Caco-2 (cell line): ENCODE measurements at regions of chr6 and their contacts with region 1.

Region 1: GRCh38 chr6:111259089-111259831 is 172.0 kb downstream of the SLC16A10 start:
- DNase-seq: peak; percentile 98 to 99
- H3K4me3 ChIP-seq: peak overlapping the region; percentile 60
- H3K4me3 Mint-ChIP-seq: peak overlapping the region; percentile 77
- H3K27ac Mint-ChIP-seq: peak overlapping the region; percentile 76
- H3K4me1 ChIP-seq: peaks cover 13% of the 10 kb centered on the region
- H3K4me1 Mint-ChIP-seq: peaks cover 14% of the 10 kb centered on the region
- H3K27me3 ChIP-seq: no peaks in the 10 kb centered on the region
- H3K27me3 Mint-ChIP-seq: no peaks in the 10 kb centered on the region
- CTCF ChIP-seq: peak; percentile 82 to 92

Region 2: GRCh38 chr6:110528101-110528929 is 730.9 kb before region 1 on chr6:
- CTCF ChIA-PET with region 1: no interaction called
- POLR2A ChIA-PET with region 1: no interaction called
- intact Hi-C with region 1: loop called (anchors 5 kb)
- DNase-seq: peak in 1 of 2 experiments; percentile 58
- H3K4me3 ChIP-seq: no peak overlapping the region
- H3K4me3 Mint-ChIP-seq: no peak overlapping the region
- H3K27ac Mint-ChIP-seq: no peak overlapping the region
- H3K4me1 ChIP-seq: peaks cover 3% of the 10 kb centered on the region; the same call in 1 of the 2 replicates
- H3K4me1 Mint-ChIP-seq: no peaks in the 10 kb centered on the region
- H3K27me3 ChIP-seq: no peaks in the 10 kb centered on the region
- H3K27me3 Mint-ChIP-seq: no peaks in the 10 kb centered on the region
- CTCF ChIP-seq: peak; percentile 68 to 79

Region 3: DNA sequence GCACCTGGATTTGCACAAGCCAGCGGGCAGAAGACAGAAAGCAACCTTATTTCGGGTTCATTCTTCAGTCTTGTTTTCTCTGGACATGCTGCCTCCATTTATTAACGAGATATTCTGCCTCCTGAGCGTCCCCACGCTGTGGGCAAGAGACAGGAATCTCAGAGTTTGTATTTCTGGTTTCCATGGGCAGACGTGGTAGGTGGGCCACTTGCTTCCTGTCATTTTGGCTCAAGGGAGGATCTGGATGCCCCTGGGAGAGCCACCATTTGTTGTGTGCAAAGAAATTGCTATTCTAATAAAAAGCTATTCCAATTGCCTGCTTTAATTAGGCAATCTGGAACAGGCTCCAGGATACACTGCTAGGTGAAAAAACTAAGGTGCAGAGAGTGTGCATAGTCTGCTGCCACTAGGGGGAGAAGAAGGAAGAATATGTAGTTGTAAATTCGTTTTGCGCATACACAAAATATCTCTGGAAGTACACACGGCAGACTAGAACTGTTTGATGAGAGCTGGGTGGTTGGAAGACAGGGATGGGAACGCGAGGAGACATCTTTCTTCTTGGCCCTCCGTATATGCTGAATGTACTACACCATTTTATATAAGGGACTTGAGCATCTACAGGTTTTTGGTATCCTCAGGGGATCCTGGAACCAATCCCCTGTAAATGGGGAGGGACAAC is 202.0 kb before region 1 on chr6:
- CTCF ChIA-PET with region 1: interaction called, 7 read pairs
- POLR2A ChIA-PET with region 1: no interaction called
- intact Hi-C with region 1: loop called (anchors 1 kb)
- DNase-seq: peak; percentile 19 to 39
- H3K4me3 ChIP-seq: no peak overlapping the region
- H3K4me3 Mint-ChIP-seq: no peak overlapping the region
- H3K27ac Mint-ChIP-seq: no peak overlapping the region
- H3K4me1 ChIP-seq: no peaks in the 10 kb centered on the region
- H3K4me1 Mint-ChIP-seq: peaks cover 11% of the 10 kb centered on the region
- H3K27me3 ChIP-seq: no peaks in the 10 kb centered on the region
- H3K27me3 Mint-ChIP-seq: no peaks in the 10 kb centered on the region
- CTCF ChIP-seq: peak; percentile 71 to 82

Region 4: DNA sequence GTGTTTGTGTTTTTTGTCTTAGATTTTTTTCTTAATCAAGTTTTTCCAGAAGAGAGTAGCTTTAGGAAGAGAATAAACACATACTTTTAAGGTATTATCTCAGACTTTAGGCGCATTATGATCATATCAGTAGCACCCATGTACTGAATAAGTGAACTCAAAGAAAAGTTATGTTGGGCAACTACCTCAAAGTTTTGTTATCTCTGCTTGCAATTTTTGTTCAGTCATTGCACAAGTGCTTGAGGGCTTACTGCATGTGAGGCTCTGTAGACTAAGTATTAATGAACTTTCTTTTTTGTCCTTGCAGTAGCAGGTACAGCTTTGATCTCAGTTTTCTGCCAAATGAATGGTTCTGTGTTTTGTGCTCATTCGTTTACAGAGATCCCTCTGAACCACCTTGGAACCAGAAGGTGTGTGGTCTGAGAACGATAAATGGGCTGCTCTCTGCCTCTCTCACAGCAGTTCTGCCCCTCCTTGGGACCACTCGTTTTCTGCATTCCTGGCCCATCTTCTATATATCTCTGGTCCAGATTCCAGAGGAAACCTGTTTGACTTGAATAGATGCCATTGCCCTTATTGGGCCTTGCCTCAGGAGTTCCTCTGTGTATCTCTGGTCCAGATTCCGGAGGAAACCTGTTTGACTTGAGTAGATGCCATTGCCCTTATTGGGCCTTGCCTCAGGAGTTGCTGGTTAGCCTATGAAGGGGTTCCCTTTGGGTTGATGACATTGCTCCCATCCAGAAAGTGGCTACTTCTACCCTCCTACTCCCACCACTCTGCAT is 17.3 kb after region 1 on chr6:
- CTCF ChIA-PET with region 1: interaction called, 15 read pairs
- POLR2A ChIA-PET with region 1: interaction called, 12 read pairs
- intact Hi-C with region 1: loop called (anchors 1 kb)
- DNase-seq: peak; percentile 83 to 87
- H3K4me3 ChIP-seq: no peak overlapping the region
- H3K4me3 Mint-ChIP-seq: peak overlapping the region; percentile 70
- H3K27ac Mint-ChIP-seq: peak overlapping the region; percentile 92
- H3K4me1 ChIP-seq: peaks cover 43% of the 10 kb centered on the region
- H3K4me1 Mint-ChIP-seq: peaks cover 47% of the 10 kb centered on the region
- H3K27me3 ChIP-seq: no peaks in the 10 kb centered on the region
- H3K27me3 Mint-ChIP-seq: no peaks in the 10 kb centered on the region
- CTCF ChIP-seq: no peak

Region 5: GRCh38 chr6:111361648-111362047 is 102.4 kb after region 1 on chr6:
- CTCF ChIA-PET with region 1: no interaction called
- POLR2A ChIA-PET with region 1: no interaction called
- intact Hi-C with region 1: loop called (anchors 1 kb)
- DNase-seq: peak; percentile 48 to 57
- H3K4me3 ChIP-seq: no peak overlapping the region
- H3K4me3 Mint-ChIP-seq: no peak overlapping the region
- H3K27ac Mint-ChIP-seq: no peak overlapping the region
- H3K4me1 ChIP-seq: no peaks in the 10 kb centered on the region
- H3K4me1 Mint-ChIP-seq: no peaks in the 10 kb centered on the region
- H3K27me3 ChIP-seq: no peaks in the 10 kb centered on the region
- H3K27me3 Mint-ChIP-seq: no peaks in the 10 kb centered on the region
- CTCF ChIP-seq: peak; percentile 50 to 54

Region 6: GRCh38 chr6:111483736-111484632 is 224.7 kb after region 1 on chr6:
- CTCF ChIA-PET with region 1: interaction called, 14 read pairs
- POLR2A ChIA-PET with region 1: interaction called, 17 read pairs
- intact Hi-C with region 1: loop called (anchors 2 kb)
- DNase-seq: peak; percentile 93 to 94
- H3K4me3 ChIP-seq: peak overlapping the region; percentile 61
- H3K4me3 Mint-ChIP-seq: peak overlapping the region; percentile 96
- H3K27ac Mint-ChIP-seq: peak overlapping the region; percentile 98
- H3K4me1 ChIP-seq: peaks cover 7% of the 10 kb centered on the region; the same call in 1 of the 2 replicates
- H3K4me1 Mint-ChIP-seq: peaks cover 14% of the 10 kb centered on the region
- H3K27me3 ChIP-seq: no peaks in the 10 kb centered on the region
- H3K27me3 Mint-ChIP-seq: no peaks in the 10 kb centered on the region
- CTCF ChIP-seq: no peak